ENCODE measurements at regions of chr10 and their contacts with region 1.

Region 1: GRCh38 chr10:70851597-70852475 is 36.1 kb downstream of the SGPL1 start:
- DNase-seq: no peak
- ATAC-seq: peak; percentile 30; the same call in 1 of the 2 replicates
- H3K4me3 ChIP-seq: no peak overlapping the region
- H3K27ac ChIP-seq: 0 out of 2 replicates have a peak overlapping the region, but pooled peaks have one; percentile 15
- H3K4me1 ChIP-seq: peaks cover 20% of the 10 kb centered on the region
- H3K27me3 ChIP-seq: no peaks in the 10 kb centered on the region
- CTCF ChIP-seq: no peak

Region 2: DNA sequence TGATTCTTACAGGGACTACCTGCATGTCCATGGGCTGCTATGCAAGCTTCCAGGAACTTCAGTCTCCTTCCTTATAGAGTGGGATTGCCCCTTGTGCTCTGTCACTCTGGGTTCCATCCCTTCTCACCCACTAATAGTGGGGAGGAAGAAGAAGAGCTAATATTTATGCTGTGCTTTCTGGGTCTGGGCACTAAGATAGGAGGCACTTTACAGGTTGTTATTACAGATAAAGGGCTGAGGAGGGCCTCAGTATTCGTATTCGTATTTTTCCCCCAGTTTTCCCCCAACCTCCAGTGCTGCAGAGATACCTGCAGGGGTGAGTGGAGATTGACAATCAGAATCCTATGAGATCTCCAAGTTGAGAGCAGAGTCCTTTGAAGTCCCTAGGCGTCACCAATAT is 1559.4 kb before region 1 on chr10:
- CTCF ChIA-PET with region 1: no interaction called
- POLR2A ChIA-PET with region 1: interaction called, 15 read pairs
- in situ Hi-C with region 1: no loop called
- intact Hi-C with region 1: no loop called
- DNase-seq: no peak
- ATAC-seq: no peak
- H3K4me3 ChIP-seq: no peak overlapping the region
- H3K27ac ChIP-seq: no peak overlapping the region
- H3K4me1 ChIP-seq: no peaks in the 10 kb centered on the region
- H3K27me3 ChIP-seq: no peaks in the 10 kb centered on the region
- CTCF ChIP-seq: no peak

Region 3: DNA sequence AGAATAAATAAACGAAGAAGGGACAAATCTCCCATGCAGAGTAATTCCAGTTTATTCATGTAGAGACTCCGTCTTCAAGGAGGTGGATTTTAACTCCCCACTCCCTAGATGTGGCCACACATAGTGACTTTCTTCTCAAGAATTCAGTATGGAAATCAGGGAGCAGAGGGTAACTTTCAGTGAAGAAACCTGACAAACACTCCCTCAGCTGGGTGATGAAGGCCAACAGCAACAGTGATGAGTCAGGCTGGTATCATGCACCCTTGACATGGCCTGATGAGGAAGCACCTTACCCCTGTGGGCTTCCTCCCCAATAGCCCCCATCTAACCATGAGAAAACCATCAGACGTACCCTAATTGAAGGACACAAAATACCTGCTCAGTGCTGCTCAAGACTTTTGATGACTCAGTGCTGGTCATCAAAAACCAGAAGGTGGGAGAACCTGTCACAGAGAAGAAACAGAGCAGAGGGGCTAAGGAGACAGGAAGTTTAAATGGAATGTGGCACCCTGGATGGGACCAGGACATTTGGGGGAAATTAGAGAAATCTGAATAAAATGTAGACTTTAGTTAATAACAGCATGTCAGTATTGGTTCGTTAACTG is 128.9 kb before region 1 on chr10:
- CTCF ChIA-PET with region 1: no interaction called
- POLR2A ChIA-PET with region 1: no interaction called
- in situ Hi-C with region 1: no loop called
- intact Hi-C with region 1: no loop called
- DNase-seq: peak; percentile 36
- ATAC-seq: no peak
- H3K4me3 ChIP-seq: no peak overlapping the region
- H3K27ac ChIP-seq: no peak overlapping the region
- H3K4me1 ChIP-seq: no peaks in the 10 kb centered on the region
- H3K27me3 ChIP-seq: peaks cover 3% of the 10 kb centered on the region; the same call in 1 of the 2 replicates
- CTCF ChIP-seq: no peak